Astrocyte of the cerebellum (primary cell): ENCODE measurements at regions of chr18 and their contacts with region 1.

Region 1: GRCh38 chr18:9814431-9814830 is 71.3 kb upstream of the TXNDC2 start:
- DNase-seq: peak; percentile 74
- H3K4me3 ChIP-seq: no peak overlapping the region
- CTCF ChIP-seq: no peak

Region 2: GRCh38 chr18:9711361-9712129 is 102.9 kb before region 1 on chr18:
- in situ Hi-C with region 1: loop called (anchors 5 kb)
- DNase-seq: no peak
- H3K4me3 ChIP-seq: no peak overlapping the region
- CTCF ChIP-seq: no peak

Region 3: GRCh38 chr18:9849407-9850281 is 35.2 kb after region 1 on chr18:
- in situ Hi-C with region 1: no loop called
- DNase-seq: no peak
- H3K4me3 ChIP-seq: no peak overlapping the region
- CTCF ChIP-seq: no peak